Heart left ventricle (tissue), 16 donors: ENCODE measurements at regions of chr18 and their contacts with region 1.

Region 1: GRCh38 chr18:45879681-45880655 is 54.5 kb downstream of the SIGLEC15 start:
- DNase-seq: peak; percentile 64 to 87 (median 68)
- ATAC-seq: peak; percentile 81 to 95 (median 92)
- H3K4me3 ChIP-seq: no peak overlapping the region
- H3K27ac ChIP-seq: no peak overlapping the region
- H3K4me1 ChIP-seq: peaks cover 0 to 6% (median 2%) of the 10 kb centered on the region in 12 donors
- H3K27me3 ChIP-seq: no peaks in the 10 kb centered on the region
- CTCF ChIP-seq: peak; percentile 98 to 100 (median 99)
- POLR2A ChIP-seq: no peak

Region 2: GRCh38 chr18:45628968-45629958 is 250.7 kb before region 1 on chr18:
- intact Hi-C with region 1: no loop called
- DNase-seq: no peak
- ATAC-seq: no peak
- H3K4me3 ChIP-seq: no peak overlapping the region
- H3K27ac ChIP-seq: no peak overlapping the region
- H3K4me1 ChIP-seq: peaks cover 0 to 13% (median 0%) of the 10 kb centered on the region in 12 donors
- H3K27me3 ChIP-seq: peaks cover 0 to under 1% (median 0%) of the 10 kb centered on the region in 9 donors
- CTCF ChIP-seq: no peak
- POLR2A ChIP-seq: no peak

Region 3: DNA sequence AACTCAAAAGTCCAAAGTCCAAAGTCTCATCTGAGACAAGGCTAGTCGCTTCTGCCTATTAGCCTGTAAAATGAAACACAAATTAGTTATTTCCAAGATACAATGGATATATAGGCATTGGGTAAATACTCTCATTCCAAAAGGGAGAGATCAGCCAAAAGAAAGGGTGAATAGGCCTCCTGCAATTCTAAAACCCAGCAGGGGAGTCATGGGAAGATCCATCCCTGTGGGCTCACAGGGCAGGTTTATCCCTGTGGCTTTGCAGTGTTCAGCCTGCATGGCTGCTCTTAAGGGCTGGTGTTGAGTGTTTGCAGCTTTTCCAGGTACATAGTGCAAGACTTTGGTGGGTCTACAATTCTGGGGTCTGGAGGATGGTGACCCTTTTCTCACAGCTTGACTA is 177.1 kb before region 1 on chr18:
- intact Hi-C with region 1: no loop called
- DNase-seq: no peak
- ATAC-seq: no peak
- H3K4me3 ChIP-seq: no peak overlapping the region
- H3K27ac ChIP-seq: no peak overlapping the region
- H3K4me1 ChIP-seq: no peaks in the 10 kb centered on the region
- H3K27me3 ChIP-seq: no peaks in the 10 kb centered on the region
- CTCF ChIP-seq: no peak
- POLR2A ChIP-seq: no peak

Region 4: GRCh38 chr18:45974088-45974536 is 94.1 kb after region 1 on chr18:
- intact Hi-C with region 1: loop called in 1 of 10 experiments (anchors 10 kb)
- DNase-seq: peak in 4 of 5 donors; percentile 27 to 48 (median 41)
- ATAC-seq: peak; percentile 63 to 87 (median 78)
- H3K4me3 ChIP-seq: no peak overlapping the region
- H3K27ac ChIP-seq: peak overlapping the region in 1 of 12 donors; percentile 32
- H3K4me1 ChIP-seq: peaks cover 0 to 6% (median 0%) of the 10 kb centered on the region in 12 donors
- H3K27me3 ChIP-seq: no peaks in the 10 kb centered on the region
- CTCF ChIP-seq: peak; percentile 54 to 78 (median 66)
- POLR2A ChIP-seq: no peak